ENCODE measurements at regions of chr17 and their contacts with region 1.

Region 1: DNA sequence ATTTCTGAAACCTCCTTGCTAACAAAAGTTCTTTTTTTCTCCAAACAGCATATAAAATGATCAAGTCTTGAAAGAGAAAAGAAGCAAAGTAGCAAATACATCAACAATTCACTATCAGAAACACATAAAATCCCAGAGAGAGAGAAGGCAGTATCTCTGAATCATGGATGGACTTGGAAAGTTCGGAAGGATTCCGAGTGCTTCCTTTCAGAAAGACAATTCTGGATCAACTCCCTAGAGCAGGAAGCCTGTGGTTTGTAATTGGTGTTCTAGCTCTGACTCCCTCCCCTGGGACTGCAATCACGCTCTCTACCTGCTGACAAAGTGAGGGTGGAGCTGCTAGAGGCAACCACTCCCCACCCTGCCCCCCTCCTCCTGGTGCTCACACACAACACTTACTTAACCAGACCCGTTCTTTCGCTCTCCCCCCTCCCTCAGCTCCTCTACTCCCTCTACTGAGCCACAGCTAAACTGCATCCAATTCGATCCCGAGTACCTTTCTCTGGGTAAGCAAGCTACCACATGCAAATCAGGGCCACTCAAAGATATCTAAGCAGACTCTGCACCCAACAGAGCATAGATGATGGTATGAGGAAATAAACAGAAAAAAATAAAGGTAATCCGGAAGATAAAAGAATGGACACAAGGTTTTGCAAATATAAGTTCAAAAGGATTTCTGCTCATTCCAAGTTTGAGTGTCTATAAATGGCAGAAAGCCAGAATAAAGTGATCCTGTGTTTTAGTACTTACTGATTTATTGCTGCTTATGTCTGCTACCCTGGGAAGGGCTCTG is at the start of gene RNF43:
- DNase-seq: peak; percentile 98
- ATAC-seq: peak; percentile 87
- H3K4me3 ChIP-seq: peak within 1 kb of the TSS; percentile 53
- H3K27ac ChIP-seq: peak within 1 kb of the TSS; percentile 70
- H3K4me1 ChIP-seq: peaks cover 5% of the 10 kb centered on the region; the same call in 1 of the 2 replicates
- H3K27me3 ChIP-seq: no peaks in the 10 kb centered on the region
- CTCF ChIP-seq: peak; percentile 90 to 92 (median 92)
- EP300 ChIP-seq: peak; percentile 68 to 90
- POLR2A ChIP-seq: no peak
- RAD21 ChIP-seq: peak; percentile 91
- polyA plus RNA-seq, gene RNF43: 1.2 to 1.3 TPM

Region 2: GRCh38 chr17:58249270-58250133 is 168.0 kb before region 1 on chr17:
- CTCF ChIA-PET with region 1: interaction called, 14 read pairs
- POLR2A ChIA-PET with region 1: interaction called, 3 read pairs
- RAD21 ChIA-PET with region 1: interaction called, 4 read pairs
- SMC1A ChIA-PET with region 1: interaction called, 3 read pairs
- in situ Hi-C with region 1: no loop called
- intact Hi-C with region 1: no loop called
- DNase-seq: no peak
- ATAC-seq: peak; percentile 97
- H3K4me3 ChIP-seq: peak overlapping the region; percentile 68; the same call in 1 of the 2 replicates
- H3K27ac ChIP-seq: no peak overlapping the region
- H3K4me1 ChIP-seq: peaks cover 6% of the 10 kb centered on the region
- H3K27me3 ChIP-seq: no peaks in the 10 kb centered on the region; a peak in 2 of 4 replicates
- CTCF ChIP-seq: peak; percentile 82 to 95 (median 87)
- EP300 ChIP-seq: no peak
- POLR2A ChIP-seq: no peak
- RAD21 ChIP-seq: peak; percentile 49

Region 3: GRCh38 chr17:58317421-58318064 is 100.0 kb before region 1 on chr17:
- CTCF ChIA-PET with region 1: interaction called, 66 read pairs
- POLR2A ChIA-PET with region 1: interaction called, 5 read pairs
- RAD21 ChIA-PET with region 1: interaction called, 66 read pairs
- SMC1A ChIA-PET with region 1: interaction called, 45 read pairs
- in situ Hi-C with region 1: no loop called
- intact Hi-C with region 1: loop called (anchors 1 kb)
- DNase-seq: peak; percentile 66
- ATAC-seq: peak; percentile 95
- H3K4me3 ChIP-seq: no peak overlapping the region
- H3K27ac ChIP-seq: peak overlapping the region; percentile 50
- H3K4me1 ChIP-seq: peaks cover 7% of the 10 kb centered on the region
- H3K27me3 ChIP-seq: no peaks in the 10 kb centered on the region
- CTCF ChIP-seq: peak; percentile 78 to 91 (median 87)
- EP300 ChIP-seq: no peak
- POLR2A ChIP-seq: peak; percentile 22; the same call in 1 of the 2 replicates
- RAD21 ChIP-seq: peak; percentile 93

Region 4: DNA sequence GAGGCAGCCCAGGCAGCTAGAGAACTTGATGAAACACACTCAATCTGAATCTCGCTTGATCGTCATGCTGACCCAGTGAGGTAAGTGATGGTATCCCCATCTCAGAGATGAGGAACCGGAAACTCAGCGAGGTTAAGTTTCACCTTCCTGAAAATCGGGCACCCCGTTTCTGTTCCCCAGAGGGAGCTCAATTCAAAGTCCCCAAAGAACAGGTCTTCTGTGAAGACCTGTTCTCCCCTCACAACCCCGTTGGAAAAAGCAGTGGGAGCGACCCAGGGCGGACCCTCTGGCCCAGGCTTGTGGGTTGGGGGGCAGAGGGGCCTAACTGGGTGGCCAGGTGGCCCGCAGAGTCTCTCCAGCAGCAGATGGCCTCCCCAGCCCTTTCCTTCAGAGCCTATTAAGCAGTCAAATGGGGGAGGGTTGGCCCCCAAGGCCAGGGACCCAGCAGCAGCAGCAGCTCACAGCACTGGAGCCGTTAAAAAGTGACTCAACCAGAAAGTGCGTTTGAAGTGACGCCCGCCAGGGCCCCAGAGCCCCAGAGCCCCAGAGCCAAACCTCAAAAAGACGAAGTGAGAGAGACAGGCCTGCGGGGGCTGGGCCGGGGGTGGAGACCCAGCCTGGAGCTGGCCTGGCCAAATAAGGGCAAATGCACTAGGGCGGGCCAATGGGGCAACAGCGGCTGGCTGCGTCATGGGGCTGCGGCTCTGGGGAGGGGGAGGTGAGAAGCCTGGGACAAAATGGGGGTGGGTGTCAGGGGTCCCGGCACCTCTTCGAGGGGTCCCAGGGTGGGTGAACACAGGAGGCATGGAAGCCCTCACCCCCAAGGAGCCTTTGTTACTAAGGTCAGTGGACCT is 79.7 kb before region 1 on chr17:
- CTCF ChIA-PET with region 1: interaction called, 102 read pairs
- POLR2A ChIA-PET with region 1: interaction called, 373 read pairs
- RAD21 ChIA-PET with region 1: interaction called, 323 read pairs
- SMC1A ChIA-PET with region 1: interaction called, 195 read pairs
- in situ Hi-C with region 1: no loop called
- intact Hi-C with region 1: loop called (anchors 2 kb)
- DNase-seq: peak; percentile 90
- ATAC-seq: peak; percentile 62
- H3K4me3 ChIP-seq: peak overlapping the region; percentile 83
- H3K27ac ChIP-seq: peak overlapping the region; percentile 100
- H3K4me1 ChIP-seq: peaks cover 59% of the 10 kb centered on the region
- H3K27me3 ChIP-seq: no peaks in the 10 kb centered on the region
- CTCF ChIP-seq: no peak
- EP300 ChIP-seq: peak; percentile 98
- POLR2A ChIP-seq: peak; percentile 82
- RAD21 ChIP-seq: peak; percentile 19; the same call in 1 of the 2 replicates

Region 5: DNA sequence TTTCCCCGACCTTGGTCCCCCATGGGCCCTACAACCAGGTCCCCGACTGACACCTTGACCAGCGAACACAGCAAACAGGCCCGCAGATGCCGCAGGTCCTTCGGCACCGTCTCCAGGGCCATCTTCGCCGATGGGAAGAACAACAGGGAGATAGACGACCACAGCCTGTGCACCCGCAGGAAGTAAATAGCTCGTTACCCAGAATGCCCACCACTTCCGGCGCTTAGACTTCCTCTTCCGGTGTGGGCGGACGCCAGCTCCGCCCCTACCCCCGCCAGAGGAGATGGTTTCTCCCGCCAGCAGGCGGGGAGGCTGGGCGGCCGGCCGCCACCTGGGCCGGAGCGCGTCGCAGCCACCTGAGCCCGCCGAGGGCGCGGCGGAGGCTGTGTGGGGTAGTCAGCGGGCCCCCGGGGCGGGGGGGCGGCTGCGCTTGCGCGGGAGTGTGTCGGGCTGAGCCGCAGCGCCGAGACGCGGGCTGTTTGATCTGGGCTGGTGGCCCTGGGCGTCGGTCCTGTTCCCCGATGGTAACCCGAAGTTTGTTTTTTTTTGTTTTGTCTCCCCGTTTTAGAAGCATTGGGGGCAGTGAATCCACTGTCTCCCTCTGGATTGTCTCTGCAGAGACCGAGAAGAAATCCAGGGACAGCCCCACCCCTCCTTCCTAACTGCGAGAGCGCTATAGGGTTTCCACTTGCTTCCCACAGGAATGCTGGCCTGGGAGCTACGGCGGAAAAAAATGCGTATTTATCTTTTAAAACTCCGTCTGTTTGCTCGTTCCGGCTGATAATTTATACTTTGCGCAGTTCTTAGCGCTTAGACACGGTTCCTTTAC is 65.3 kb before region 1 on chr17 and contains the start of gene SUPT4H1:
- CTCF ChIA-PET with region 1: interaction called, 28 read pairs
- POLR2A ChIA-PET with region 1: interaction called, 373 read pairs
- RAD21 ChIA-PET with region 1: interaction called, 323 read pairs
- SMC1A ChIA-PET with region 1: interaction called, 91 read pairs
- in situ Hi-C with region 1: no loop called
- intact Hi-C with region 1: no loop called
- DNase-seq: peak; percentile 73
- ATAC-seq: peak; percentile 96
- H3K4me3 ChIP-seq: peak within 1 kb of the TSS; percentile 94
- H3K27ac ChIP-seq: peak within 1 kb of the TSS; percentile 93
- H3K4me1 ChIP-seq: peaks cover 10% of the 10 kb centered on the region
- H3K27me3 ChIP-seq: no peaks in the 10 kb centered on the region
- CTCF ChIP-seq: no peak; a peak in 1 of 6 replicates
- EP300 ChIP-seq: peak in 1 of 2 experiments; percentile 43; a peak in 2 of 4 replicates
- POLR2A ChIP-seq: peak; percentile 91
- RAD21 ChIP-seq: peak; percentile 35; the same call in 1 of the 2 replicates
- polyA plus RNA-seq, gene SUPT4H1: 148 to 293 TPM

Region 6: DNA sequence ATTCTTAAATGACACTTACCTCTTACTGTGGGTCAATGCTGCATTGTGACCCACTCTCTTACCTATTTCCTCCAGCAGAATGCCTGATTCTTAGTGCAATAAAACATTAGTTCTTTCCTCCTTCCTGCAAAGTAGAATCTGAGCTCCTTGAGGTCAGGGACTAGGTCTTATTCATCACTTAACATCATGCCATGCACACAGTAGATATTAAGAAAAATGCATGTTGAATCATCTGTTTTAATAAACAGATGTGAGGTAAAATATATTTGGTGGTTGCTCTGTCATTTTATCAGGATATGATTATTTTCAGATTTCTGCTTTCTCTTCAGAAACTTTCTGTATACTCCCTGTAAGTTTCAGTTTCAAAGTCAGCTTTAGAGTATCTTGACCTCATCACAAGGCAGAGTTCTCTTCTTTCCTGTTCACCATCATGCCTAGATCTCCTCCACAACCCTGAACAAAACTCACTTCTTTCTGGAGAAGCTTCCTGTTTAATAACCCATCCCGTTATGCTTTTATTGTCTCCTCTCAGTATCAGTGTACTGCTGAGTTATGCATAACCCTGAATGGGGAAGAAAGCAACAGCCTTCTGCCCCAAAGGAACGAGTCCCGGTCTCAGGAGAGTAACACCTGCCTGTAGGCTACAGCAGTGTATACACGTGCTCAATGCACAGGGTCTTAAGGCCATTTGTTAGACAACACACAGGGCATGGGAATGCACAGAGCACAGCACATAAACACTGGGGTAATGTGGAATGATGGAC is 35.2 kb before region 1 on chr17:
- CTCF ChIA-PET with region 1: interaction called, 17 read pairs
- POLR2A ChIA-PET with region 1: interaction called, 16 read pairs
- RAD21 ChIA-PET with region 1: interaction called, 70 read pairs
- SMC1A ChIA-PET with region 1: interaction called, 74 read pairs
- in situ Hi-C with region 1: no loop called
- intact Hi-C with region 1: loop called (anchors 2 kb)
- DNase-seq: peak; percentile 44
- ATAC-seq: peak; percentile 90
- H3K4me3 ChIP-seq: no peak overlapping the region; the same call in 1 of the 2 replicates
- H3K27ac ChIP-seq: peak overlapping the region; percentile 42; the same call in 1 of the 2 replicates
- H3K4me1 ChIP-seq: peaks cover 19% of the 10 kb centered on the region
- H3K27me3 ChIP-seq: no peaks in the 10 kb centered on the region
- CTCF ChIP-seq: no peak
- EP300 ChIP-seq: no peak
- POLR2A ChIP-seq: no peak
- RAD21 ChIP-seq: no peak

Region 7: GRCh38 chr17:58402047-58402446 is 15.4 kb before region 1 on chr17:
- CTCF ChIA-PET with region 1: interaction called, 14 read pairs
- POLR2A ChIA-PET with region 1: interaction called, 8 read pairs
- RAD21 ChIA-PET with region 1: interaction called, 5 read pairs
- SMC1A ChIA-PET with region 1: interaction called, 32 read pairs
- in situ Hi-C with region 1: no loop called
- intact Hi-C with region 1: no loop called
- DNase-seq: no peak
- ATAC-seq: peak; percentile 39
- H3K4me3 ChIP-seq: no peak overlapping the region
- H3K27ac ChIP-seq: no peak overlapping the region
- H3K4me1 ChIP-seq: no peaks in the 10 kb centered on the region
- H3K27me3 ChIP-seq: no peaks in the 10 kb centered on the region; a peak in 1 of 4 replicates
- CTCF ChIP-seq: no peak
- EP300 ChIP-seq: no peak
- POLR2A ChIP-seq: no peak
- RAD21 ChIP-seq: no peak